Activated CD4-positive, alpha-beta T cell treated with anti-CD3 and anti-CD28 coated beads for 36 hours (primary cell): ENCODE measurements at regions of chr19 and their contacts with region 1.

Region 1: DNA sequence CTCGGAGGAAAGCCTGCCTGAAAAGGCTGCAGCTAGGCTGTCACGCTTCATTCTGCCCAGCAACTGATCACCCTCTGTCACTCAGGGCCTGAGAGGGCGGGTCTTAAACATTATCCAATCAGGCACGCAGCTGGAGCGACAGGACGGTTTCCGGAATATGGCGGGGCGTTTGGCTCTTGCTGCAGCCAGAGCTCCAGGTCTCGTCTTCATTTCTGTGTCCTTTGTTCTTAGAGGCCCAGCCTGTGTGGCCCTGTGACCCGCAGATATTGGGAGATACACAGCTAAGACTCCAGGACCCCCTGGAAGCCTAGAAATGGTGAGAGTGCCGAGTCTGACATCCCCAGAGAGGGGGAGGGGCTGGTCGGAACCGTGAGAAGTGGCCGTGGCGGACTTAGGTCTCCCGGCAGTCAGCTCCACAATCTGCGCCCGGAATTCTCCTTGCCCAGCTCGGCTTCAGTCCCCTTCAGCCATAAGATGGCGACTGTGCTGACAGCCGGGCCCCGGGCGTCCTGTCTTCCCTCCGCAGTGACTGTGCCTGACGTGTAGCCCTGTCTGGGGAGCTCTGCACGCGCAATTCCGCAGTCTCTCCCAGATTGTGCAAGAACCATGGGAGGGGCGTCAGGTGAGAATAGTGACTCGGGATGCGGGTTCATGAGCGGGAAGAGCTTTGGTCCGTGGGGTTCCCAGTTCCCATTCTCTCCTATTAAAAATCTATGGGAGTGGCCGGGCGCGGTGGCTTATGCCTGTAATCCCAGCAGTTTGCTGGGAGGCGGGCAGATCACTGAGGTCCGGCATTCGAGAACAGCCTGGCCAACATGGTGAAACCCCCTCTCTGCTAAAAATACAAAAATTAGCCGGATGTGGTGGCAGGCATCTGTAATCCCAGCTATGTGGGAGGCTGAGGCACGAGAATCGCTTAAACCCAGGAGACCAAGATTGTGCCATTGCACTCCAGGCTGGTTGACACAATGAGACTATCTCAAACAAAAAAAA is at the start of gene ZNF429:
- DNase-seq: peak; percentile 94
- ATAC-seq: peak; percentile 99
- H3K4me3 Mint-ChIP-seq: peak within 1 kb of the TSS; percentile 100
- H3K27ac Mint-ChIP-seq: peak within 1 kb of the TSS; percentile 99
- H3K4me1 Mint-ChIP-seq: peaks cover 38% of the 10 kb centered on the region
- H3K27me3 Mint-ChIP-seq: no peaks in the 10 kb centered on the region
- total RNA-seq, gene ZNF429: 13.3 to 15.5 TPM

Region 2: GRCh38 chr19:20923077-20923871 is 582.5 kb before region 1 on chr19 and contains the start of gene ZNF85:
- CTCF ChIA-PET with region 1: no interaction called
- POLR2A ChIA-PET with region 1: no interaction called
- intact Hi-C with region 1: loop called in 1 of 2 experiments (anchors 10 kb)
- DNase-seq: peak; percentile 95
- ATAC-seq: peak; percentile 99
- H3K4me3 Mint-ChIP-seq: peak within 1 kb of the TSS; percentile 91
- H3K27ac Mint-ChIP-seq: peak within 1 kb of the TSS; percentile 96
- H3K4me1 Mint-ChIP-seq: peaks cover 25% of the 10 kb centered on the region
- H3K27me3 Mint-ChIP-seq: no peaks in the 10 kb centered on the region
- total RNA-seq, gene ZNF85: 23.2 to 29.3 TPM

Region 3: GRCh38 chr19:21109116-21109515 is 396.6 kb before region 1 on chr19:
- CTCF ChIA-PET with region 1: no interaction called
- POLR2A ChIA-PET with region 1: no interaction called
- intact Hi-C with region 1: no loop called
- DNase-seq: no peak
- ATAC-seq: no peak
- H3K4me3 Mint-ChIP-seq: no peak overlapping the region
- H3K27ac Mint-ChIP-seq: no peak overlapping the region
- H3K4me1 Mint-ChIP-seq: no peaks in the 10 kb centered on the region
- H3K27me3 Mint-ChIP-seq: no peaks in the 10 kb centered on the region

Region 4: GRCh38 chr19:21328885-21329605 is 176.7 kb before region 1 on chr19 and contains the start of gene ZNF708:
- CTCF ChIA-PET with region 1: interaction called, 4 read pairs
- POLR2A ChIA-PET with region 1: interaction called, 7 read pairs
- intact Hi-C with region 1: loop called in 1 of 2 experiments (anchors 1 kb)
- DNase-seq: peak; percentile 85
- ATAC-seq: peak; percentile 100
- H3K4me3 Mint-ChIP-seq: peak within 1 kb of the TSS; percentile 97
- H3K27ac Mint-ChIP-seq: peak within 1 kb of the TSS; percentile 100
- H3K4me1 Mint-ChIP-seq: peaks cover 33% of the 10 kb centered on the region
- H3K27me3 Mint-ChIP-seq: no peaks in the 10 kb centered on the region
- total RNA-seq, gene ZNF708: 11.7 to 11.8 TPM

Region 5: DNA sequence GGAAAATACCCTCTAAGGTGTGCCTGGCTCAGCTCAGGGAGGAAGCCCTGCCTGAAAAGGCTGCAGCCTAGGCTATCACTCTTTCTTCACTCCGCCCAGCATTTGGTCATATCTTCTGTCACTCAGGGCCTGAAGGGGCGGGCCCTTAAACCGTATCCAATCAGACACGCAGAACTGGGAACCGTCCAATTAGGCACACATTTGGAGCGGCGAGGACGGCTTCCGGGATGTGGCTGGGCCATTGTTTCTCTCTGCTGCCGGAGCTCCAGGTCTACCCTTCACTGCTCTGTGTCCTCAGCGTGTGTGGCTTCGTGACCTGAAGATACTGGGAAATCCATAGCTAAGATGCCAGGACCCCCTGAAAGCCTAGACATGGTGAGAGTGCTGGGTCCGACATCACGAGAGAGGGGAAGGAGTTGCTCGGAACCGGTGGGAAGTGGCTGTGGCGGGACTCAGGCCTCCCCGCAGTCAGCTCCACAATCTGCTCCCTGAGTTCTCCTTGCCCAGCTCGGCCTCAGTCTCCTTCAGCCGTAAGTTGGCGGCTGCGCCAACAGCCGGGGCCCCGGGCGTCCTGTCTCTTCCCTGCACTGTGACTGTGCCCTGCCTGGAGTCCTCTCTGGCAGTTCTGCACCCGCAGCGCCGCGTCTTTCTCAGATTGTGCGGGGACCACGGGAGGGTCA is 108.7 kb before region 1 on chr19 and contains the start of gene ZNF493:
- CTCF ChIA-PET with region 1: no interaction called
- POLR2A ChIA-PET with region 1: no interaction called
- intact Hi-C with region 1: loop called in 1 of 2 experiments (anchors 1 kb)
- DNase-seq: peak; percentile 95
- ATAC-seq: peak; percentile 100
- H3K4me3 Mint-ChIP-seq: peak within 1 kb of the TSS; percentile 98
- H3K27ac Mint-ChIP-seq: peak within 1 kb of the TSS; percentile 92
- H3K4me1 Mint-ChIP-seq: peaks cover 32% of the 10 kb centered on the region
- H3K27me3 Mint-ChIP-seq: no peaks in the 10 kb centered on the region
- total RNA-seq, gene ZNF493: 11.9 to 12.8 TPM

Region 6: GRCh38 chr19:21568816-21569493 is 63.2 kb after region 1 on chr19:
- CTCF ChIA-PET with region 1: interaction called, 15 read pairs
- POLR2A ChIA-PET with region 1: interaction called, 6 read pairs
- intact Hi-C with region 1: loop called (anchors 1 kb)
- DNase-seq: peak; percentile 92
- ATAC-seq: peak; percentile 97
- H3K4me3 Mint-ChIP-seq: peak overlapping the region; percentile 86
- H3K27ac Mint-ChIP-seq: peak overlapping the region; percentile 100
- H3K4me1 Mint-ChIP-seq: peaks cover 29% of the 10 kb centered on the region
- H3K27me3 Mint-ChIP-seq: no peaks in the 10 kb centered on the region

Region 7: GRCh38 chr19:21767065-21767800 is 261.5 kb after region 1 on chr19 and contains the start of gene ZNF100:
- CTCF ChIA-PET with region 1: no interaction called
- POLR2A ChIA-PET with region 1: no interaction called
- intact Hi-C with region 1: loop called in 1 of 2 experiments (anchors 1 kb)
- DNase-seq: peak; percentile 94
- ATAC-seq: peak; percentile 98
- H3K4me3 Mint-ChIP-seq: peak within 1 kb of the TSS; percentile 98
- H3K27ac Mint-ChIP-seq: peak within 1 kb of the TSS; percentile 95
- H3K4me1 Mint-ChIP-seq: peaks cover 30% of the 10 kb centered on the region
- H3K27me3 Mint-ChIP-seq: no peaks in the 10 kb centered on the region
- total RNA-seq, gene ZNF100: 24.7 to 27.0 TPM